Activated T-helper 1 cell treated with anti-CD3 and anti-CD28 coated beads, Interleukin-12 subunit alpha, Interleukin-12 subunit beta, Interleukin-2, Interleukin-4 antibody, amounts not matched to agents 30 ng/mL and 10 ng/mL and 1 ng/mL, durations not matched to agents 14 hours and 24 hours and 36 hours (primary cell): ENCODE measurements at regions of chr6 and their contacts with region 1.

Region 1: GRCh38 chr6:10694302-10695085 is at the starts of genes C6orf52 and PAK1IP1:
- DNase-seq: peak; percentile 90
- H3K4me3 Mint-ChIP-seq: peak within 1 kb of the TSS; percentile 91
- H3K27ac Mint-ChIP-seq: peak within 1 kb of the TSS; percentile 99
- H3K4me1 Mint-ChIP-seq: peaks cover 49% of the 10 kb centered on the region
- H3K27me3 Mint-ChIP-seq: peaks cover 3% of the 10 kb centered on the region
- total RNA-seq, gene C6orf52: 3.6 and 6.0 TPM in 2 replicates
- total RNA-seq, gene PAK1IP1: 35.3 and 37.4 TPM in 2 replicates

Region 2: GRCh38 chr6:10510592-10511367 is 183.7 kb before region 1 on chr6:
- intact Hi-C with region 1: loop called (anchors 1 kb)
- DNase-seq: peak; percentile 35
- H3K4me3 Mint-ChIP-seq: no peak overlapping the region
- H3K27ac Mint-ChIP-seq: no peak overlapping the region
- H3K4me1 Mint-ChIP-seq: peaks cover 13% of the 10 kb centered on the region
- H3K27me3 Mint-ChIP-seq: peaks cover 14% of the 10 kb centered on the region

Region 3: DNA sequence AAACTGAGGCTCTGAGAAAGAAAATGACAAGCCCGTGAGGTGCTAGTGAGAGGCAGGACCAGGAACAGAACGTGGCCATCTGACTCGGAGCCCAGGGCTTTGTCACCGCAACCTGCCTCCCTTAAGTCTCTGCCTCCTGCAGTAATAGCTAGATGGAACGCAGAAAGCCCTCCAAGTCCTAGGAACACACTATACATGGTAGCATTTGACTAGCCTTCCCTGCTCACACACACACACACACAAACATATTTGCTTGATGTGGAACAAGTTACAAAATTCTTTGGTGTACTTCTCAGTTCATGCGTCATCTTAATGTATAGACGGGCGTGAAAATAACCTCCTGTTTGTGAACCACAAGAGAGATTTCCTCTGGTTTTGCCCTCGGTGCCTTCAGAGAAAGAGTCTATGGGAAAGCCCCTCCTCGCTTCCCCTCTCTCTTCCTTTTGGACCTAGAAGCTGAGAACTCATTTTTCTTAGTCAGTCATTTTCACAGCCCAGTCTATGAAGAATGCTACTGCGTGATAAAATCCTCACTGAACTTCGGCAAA is 38.9 kb before region 1 on chr6:
- intact Hi-C with region 1: loop called (anchors 2 kb)
- DNase-seq: peak; percentile 43
- H3K4me3 Mint-ChIP-seq: peak overlapping the region; percentile 62
- H3K27ac Mint-ChIP-seq: peak overlapping the region; percentile 46
- H3K4me1 Mint-ChIP-seq: peaks cover 19% of the 10 kb centered on the region
- H3K27me3 Mint-ChIP-seq: no peaks in the 10 kb centered on the region

Region 4: DNA sequence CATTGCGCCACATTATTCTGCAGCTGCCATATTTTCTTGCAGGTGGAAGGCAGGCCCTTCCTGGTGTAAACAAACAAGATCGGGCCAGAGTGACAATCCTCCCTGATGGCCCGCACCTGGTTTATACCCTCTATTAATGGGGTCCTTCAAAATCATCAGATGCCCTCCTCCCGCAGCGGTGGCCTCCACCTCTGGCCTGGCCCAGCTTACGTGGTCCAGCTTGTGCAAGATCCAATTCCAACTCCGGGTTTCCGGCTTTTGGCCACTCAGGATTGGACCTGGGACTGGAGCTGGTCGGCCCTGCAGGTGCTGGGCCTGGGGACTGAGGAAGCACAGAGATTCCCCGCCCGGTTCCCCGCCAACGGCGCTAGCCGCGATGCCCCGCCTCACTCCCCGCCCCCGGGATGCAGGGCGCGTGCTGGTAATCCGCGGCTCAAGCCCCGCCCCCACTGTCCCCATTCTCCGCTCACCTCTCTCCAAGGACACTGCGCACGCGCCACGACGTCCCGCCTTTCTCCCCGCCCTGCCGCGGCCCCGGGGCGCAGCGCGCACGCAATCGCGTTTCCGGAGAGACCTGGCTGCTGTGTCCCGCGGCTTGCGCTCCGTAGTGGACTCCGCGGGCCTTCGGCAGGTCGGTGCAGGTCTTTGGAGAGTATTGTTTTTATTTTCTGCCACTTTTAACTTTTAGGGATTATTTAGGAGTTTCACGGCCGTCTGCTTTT is 52.9 kb after region 1 on chr6 and contains the start of gene TMEM14B:
- intact Hi-C with region 1: loop called (anchors 1 kb)
- DNase-seq: peak; percentile 100
- H3K4me3 Mint-ChIP-seq: peak within 1 kb of the TSS; percentile 93
- H3K27ac Mint-ChIP-seq: peak within 1 kb of the TSS; percentile 94
- H3K4me1 Mint-ChIP-seq: peaks cover 52% of the 10 kb centered on the region
- H3K27me3 Mint-ChIP-seq: no peaks in the 10 kb centered on the region
- total RNA-seq, gene TMEM14B: 82.1 and 83.7 TPM in 2 replicates